Psoas muscle (tissue), 8 donors: ENCODE measurements at regions of chr7 and their contacts with region 1.

Region 1: DNA sequence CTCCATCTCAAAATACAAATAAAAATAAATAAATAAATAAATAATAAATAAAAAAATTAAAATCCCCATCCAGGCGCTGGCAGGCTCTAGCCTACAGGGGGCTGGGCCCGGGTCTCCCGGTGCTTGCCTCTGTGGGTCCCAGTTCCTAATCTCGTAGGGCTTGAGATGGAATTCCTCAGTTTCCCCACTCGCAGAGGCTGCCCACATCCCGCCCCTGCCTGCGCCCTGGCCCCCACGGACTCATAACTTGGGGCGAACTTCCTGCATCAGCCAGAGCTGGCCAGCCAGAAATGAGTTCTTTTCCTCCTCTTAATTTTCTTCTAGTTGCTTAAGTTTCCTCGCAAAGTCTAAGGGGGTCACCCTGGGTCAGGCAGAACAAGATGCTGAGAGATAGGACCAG is 22.0 kb upstream of the SRRM3 start:
- DNase-seq: peak in 1 of 2 donors; percentile 24
- ATAC-seq: no peak
- H3K4me3 ChIP-seq: no peak overlapping the region
- H3K27ac ChIP-seq: no peak overlapping the region
- H3K4me1 ChIP-seq: no peaks in the 10 kb centered on the region
- H3K27me3 ChIP-seq: no peaks in the 10 kb centered on the region
- CTCF ChIP-seq: no peak

Region 2: DNA sequence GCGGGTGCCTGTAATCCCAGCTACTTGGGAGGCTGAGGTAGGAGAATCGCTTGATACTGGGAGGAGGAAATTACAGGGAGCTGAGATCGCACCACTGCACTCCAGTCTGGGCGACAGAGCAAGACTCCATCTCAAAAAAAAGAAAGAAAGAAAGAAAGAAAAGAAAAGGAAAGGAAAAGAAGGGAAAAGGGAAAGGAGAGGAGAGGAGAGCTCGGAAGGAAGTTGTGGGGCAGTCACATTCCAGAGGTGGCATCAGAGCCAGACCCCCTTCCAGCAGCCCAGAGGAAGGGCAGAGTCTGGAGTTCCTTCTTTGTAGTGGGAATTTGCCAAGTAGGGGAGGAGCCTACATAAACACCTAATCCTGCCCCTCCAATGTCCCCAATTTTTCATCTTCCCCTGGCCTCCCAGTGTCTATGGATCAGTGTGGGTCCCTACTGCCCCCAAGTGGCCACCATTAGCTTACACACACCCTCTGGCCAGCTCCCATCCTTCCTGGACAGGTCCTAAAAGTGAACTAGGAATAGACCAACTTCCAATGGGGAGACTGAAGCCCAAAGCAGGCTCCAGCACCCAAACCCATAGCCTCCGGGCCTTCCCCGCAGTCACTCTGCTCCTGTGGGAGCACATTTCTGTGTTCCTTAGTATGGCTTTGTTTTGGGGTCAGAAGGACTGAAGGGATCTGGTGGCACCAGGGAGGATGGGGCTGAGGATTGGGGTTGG is 83.2 kb after region 1 on chr7:
- intact Hi-C with region 1: loop called in 1 of 2 experiments (anchors 5 kb)
- DNase-seq: no peak
- ATAC-seq: peak; percentile 61 to 79 (median 78)
- H3K4me3 ChIP-seq: no peak overlapping the region
- H3K27ac ChIP-seq: no peak overlapping the region
- H3K4me1 ChIP-seq: peaks cover 7% of the 10 kb centered on the region
- H3K27me3 ChIP-seq: peaks cover 0 to 45% (median 21%) of the 10 kb centered on the region in 3 donors
- CTCF ChIP-seq: peak; percentile 52

Region 3: GRCh38 chr7:76285604-76286374 is 106.1 kb after region 1 on chr7:
- intact Hi-C with region 1: loop called (anchors 1 to 2 kb)
- DNase-seq: no peak
- ATAC-seq: no peak
- H3K4me3 ChIP-seq: no peak overlapping the region
- H3K27ac ChIP-seq: no peak overlapping the region
- H3K4me1 ChIP-seq: no peaks in the 10 kb centered on the region
- H3K27me3 ChIP-seq: peaks cover 0 to 24% (median 9%) of the 10 kb centered on the region in 3 donors
- CTCF ChIP-seq: no peak

Region 4: DNA sequence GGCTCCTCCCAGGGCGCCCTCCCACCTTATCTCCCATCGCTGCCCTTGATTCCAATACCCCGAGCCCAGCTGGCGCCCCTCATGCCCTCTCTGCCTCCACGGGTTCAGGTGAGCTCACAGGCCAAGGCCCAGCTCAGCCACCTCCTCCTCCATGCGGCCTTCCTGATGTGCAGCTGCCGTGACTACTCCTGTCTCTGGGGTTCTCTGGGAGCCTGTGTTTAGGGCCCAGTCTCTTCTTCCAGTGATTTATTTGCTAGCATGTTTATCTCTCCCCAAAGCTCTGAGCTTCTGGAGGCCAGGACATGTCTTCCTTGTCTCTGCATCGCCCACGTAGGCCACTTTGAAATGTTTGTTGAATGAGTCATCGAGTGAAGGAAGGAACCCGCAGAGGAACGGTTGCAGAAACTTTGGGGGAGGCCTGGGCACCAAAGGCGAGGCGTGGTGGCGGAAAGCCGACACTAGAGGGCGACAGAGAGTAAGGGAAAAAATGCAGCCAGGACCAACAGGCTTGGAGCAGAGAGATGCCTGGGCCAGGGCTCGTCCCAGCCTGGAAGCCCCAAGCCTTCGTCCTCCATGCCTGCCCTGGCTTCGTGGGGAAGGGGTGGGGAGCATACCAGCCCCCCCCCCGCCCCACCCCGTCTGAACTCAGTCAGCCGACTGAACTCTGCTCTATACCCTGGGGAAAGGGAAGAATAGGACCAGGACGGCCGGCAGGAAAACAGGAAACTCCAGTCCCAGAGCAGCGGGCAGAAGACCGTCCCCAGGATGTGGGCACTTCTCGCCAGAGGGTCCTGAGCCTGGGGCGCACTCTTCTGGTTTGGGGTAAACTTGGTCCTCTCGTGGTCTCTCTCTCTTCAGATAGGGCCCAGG is 111.9 kb after region 1 on chr7:
- intact Hi-C with region 1: loop called in 1 of 2 experiments (anchors 1 kb)
- DNase-seq: peak; percentile 93 to 96
- ATAC-seq: peak; percentile 57 to 70 (median 65)
- H3K4me3 ChIP-seq: peak overlapping the region; percentile 63
- H3K27ac ChIP-seq: peak overlapping the region; percentile 98
- H3K4me1 ChIP-seq: peaks cover 49% of the 10 kb centered on the region
- H3K27me3 ChIP-seq: no peaks in the 10 kb centered on the region
- CTCF ChIP-seq: peak; percentile 99

Region 5: GRCh38 chr7:76314042-76314721 is 134.5 kb after region 1 on chr7:
- intact Hi-C with region 1: loop called (anchors 1 to 2 kb)
- DNase-seq: peak; percentile 95 to 98
- ATAC-seq: peak; percentile 74 to 78 (median 75)
- H3K4me3 ChIP-seq: no peak overlapping the region
- H3K27ac ChIP-seq: peak overlapping the region; percentile 57
- H3K4me1 ChIP-seq: peaks cover 15% of the 10 kb centered on the region
- H3K27me3 ChIP-seq: no peaks in the 10 kb centered on the region
- CTCF ChIP-seq: peak; percentile 100

Region 6: DNA sequence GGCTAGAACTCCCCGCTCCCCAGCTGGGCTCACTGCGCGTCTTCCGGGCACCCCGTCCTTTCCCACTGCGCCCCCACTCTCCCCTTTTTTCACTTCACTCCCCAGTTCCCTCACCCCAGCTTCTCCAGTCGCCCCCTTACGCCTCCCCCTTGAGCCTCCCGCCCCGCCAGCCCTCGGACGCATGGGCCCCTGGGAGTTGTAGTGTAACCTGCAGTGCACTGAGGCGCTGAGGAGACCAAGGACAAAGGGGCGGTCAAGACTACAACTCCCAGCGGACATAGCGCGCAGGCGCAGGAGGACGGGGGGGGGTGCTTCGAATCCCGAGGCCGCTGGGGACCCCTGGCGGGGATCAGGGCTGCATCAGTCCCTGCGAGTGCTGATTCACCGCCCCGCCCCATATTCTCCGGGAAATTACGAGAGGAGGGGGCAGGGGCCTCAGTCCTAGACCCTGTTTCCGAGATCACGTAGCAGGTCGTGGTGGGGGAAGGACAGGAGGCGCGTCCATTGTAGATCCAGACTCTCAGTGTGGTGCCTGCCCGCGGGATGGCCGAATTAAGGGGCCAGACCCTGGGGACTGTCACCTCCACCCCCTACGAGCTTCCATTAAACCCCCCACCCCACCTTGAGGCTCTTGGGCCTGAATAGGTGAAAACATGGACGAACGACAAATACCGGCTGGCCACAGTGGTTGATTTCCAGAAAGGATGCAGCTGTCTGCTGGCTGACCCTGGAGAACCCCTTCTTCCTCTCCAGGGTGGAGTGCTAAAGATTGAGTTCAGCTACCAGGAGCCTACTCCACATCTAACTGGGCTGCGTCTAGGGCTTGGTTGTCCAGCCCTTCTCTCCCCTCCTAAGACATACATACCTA is 179.7 kb after region 1 on chr7:
- intact Hi-C with region 1: loop called in 1 of 2 experiments (anchors 2 kb)
- DNase-seq: peak; percentile 95 to 99
- ATAC-seq: peak; percentile 93 to 95 (median 94)
- H3K4me3 ChIP-seq: peak overlapping the region; percentile 99
- H3K27ac ChIP-seq: peak overlapping the region; percentile 100
- H3K4me1 ChIP-seq: peaks cover 40% of the 10 kb centered on the region
- H3K27me3 ChIP-seq: no peaks in the 10 kb centered on the region
- CTCF ChIP-seq: peak; percentile 65

Region 7: GRCh38 chr7:76393116-76394031 is 213.7 kb after region 1 on chr7:
- intact Hi-C with region 1: no loop called
- DNase-seq: peak; percentile 94 to 98
- ATAC-seq: peak; percentile 93 to 94 (median 94)
- H3K4me3 ChIP-seq: peak overlapping the region; percentile 87
- H3K27ac ChIP-seq: peak overlapping the region; percentile 96
- H3K4me1 ChIP-seq: peaks cover 15% of the 10 kb centered on the region
- H3K27me3 ChIP-seq: no peaks in the 10 kb centered on the region
- CTCF ChIP-seq: no peak